ENCODE measurements at regions of chr20 and their contacts with region 1.

Region 1: DNA sequence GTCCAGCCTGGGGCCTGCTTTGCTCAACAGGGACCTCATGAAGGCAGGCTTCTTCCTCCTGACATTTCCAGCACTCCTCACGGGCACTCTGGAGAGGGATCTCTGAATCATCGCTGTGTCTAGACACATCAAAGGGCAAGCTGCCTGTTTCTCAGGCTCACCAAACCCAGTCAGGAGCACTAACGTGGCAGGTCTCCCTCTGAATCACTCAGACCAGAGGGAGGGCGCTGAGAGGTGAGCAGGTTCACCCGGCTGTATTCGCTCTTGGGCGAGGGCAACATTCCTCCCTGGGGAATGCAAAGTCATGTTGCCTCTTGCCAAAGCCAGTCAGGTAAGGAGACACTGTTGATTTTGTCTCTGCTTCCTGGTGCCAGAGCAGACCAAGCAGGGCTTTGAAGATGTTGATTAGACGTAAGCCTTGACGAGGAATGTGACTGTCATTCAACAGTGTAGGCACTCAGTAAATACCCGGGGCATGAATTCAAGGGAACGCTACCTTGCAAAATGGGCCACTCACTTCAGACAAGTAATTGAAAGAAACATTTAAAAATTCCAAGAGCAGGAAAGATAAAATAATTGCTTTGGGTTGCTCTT is 50.1 kb downstream of the CYP24A1 start:
- DNase-seq: peak; percentile 100
- ATAC-seq: peak; percentile 98
- H3K4me3 ChIP-seq: peak overlapping the region in 2 of 3 experiments; percentile 30 to 59; a peak in 5 of 6 replicates
- H3K27ac ChIP-seq: peak overlapping the region; percentile 98
- H3K4me1 ChIP-seq: peaks cover 87% of the 10 kb centered on the region
- H3K27me3 ChIP-seq: no peaks in the 10 kb centered on the region
- CTCF ChIP-seq: peak; percentile 44; the same call in 1 of the 2 replicates
- EP300 ChIP-seq: peak; percentile 99 to 100
- POLR2A ChIP-seq: peak; percentile 77 to 97
- RAD21 ChIP-seq: peak; percentile 87

Region 2: GRCh38 chr20:54110041-54110841 is 13.4 kb before region 1 on chr20:
- CTCF ChIA-PET with region 1: interaction called, 3 read pairs
- POLR2A ChIA-PET with region 1: interaction called, 145 read pairs
- in situ Hi-C with region 1: no loop called
- intact Hi-C with region 1: loop called (anchors 1 kb)
- DNase-seq: peak; percentile 66
- ATAC-seq: no peak
- H3K4me3 ChIP-seq: no peak overlapping the region
- H3K27ac ChIP-seq: peak overlapping the region; percentile 10
- H3K4me1 ChIP-seq: peaks cover 97% of the 10 kb centered on the region
- H3K27me3 ChIP-seq: no peaks in the 10 kb centered on the region
- CTCF ChIP-seq: no peak
- EP300 ChIP-seq: peak in 1 of 2 experiments; percentile 55; a peak in 1 of 4 replicates
- POLR2A ChIP-seq: no peak
- RAD21 ChIP-seq: no peak

Region 3: GRCh38 chr20:54140927-54141566 is 17.4 kb after region 1 on chr20:
- CTCF ChIA-PET with region 1: no interaction called
- POLR2A ChIA-PET with region 1: interaction called, 14 read pairs
- in situ Hi-C with region 1: no loop called
- intact Hi-C with region 1: no loop called
- DNase-seq: peak; percentile 96
- ATAC-seq: peak; percentile 81
- H3K4me3 ChIP-seq: no peak overlapping the region
- H3K27ac ChIP-seq: peak overlapping the region; percentile 55
- H3K4me1 ChIP-seq: peaks cover 45% of the 10 kb centered on the region
- H3K27me3 ChIP-seq: no peaks in the 10 kb centered on the region
- CTCF ChIP-seq: no peak
- EP300 ChIP-seq: peak; percentile 69 to 75; a peak in 2 of 4 replicates
- POLR2A ChIP-seq: no peak
- RAD21 ChIP-seq: no peak

Measured in HepG2 (cell line).